Posterior vena cava (tissue), 2 donors: ENCODE measurements at regions of chr18 and their contacts with region 1.

Region 1: GRCh38 chr18:25853691-25854433 is 236.6 kb downstream of the SS18 start:
- DNase-seq: no peak

Region 2: DNA sequence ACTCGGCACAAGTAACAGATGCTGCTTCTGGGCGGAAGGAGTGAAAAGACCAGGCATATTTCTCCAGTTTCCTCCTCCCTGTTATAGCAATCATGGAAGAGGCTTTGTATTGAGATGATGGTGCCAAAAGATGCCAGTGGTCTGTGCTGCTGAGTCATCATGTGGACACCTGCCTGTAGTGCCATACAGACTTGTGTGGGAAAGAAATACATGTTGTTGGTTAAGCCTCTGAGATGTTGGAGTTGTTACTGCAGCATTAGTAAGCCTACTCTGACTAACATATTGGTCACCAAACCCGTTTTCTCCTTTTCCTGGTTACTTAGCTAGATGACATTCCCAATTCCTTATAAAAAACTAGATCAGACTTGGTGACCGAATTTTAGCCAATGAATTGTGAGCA is 858.8 kb before region 1 on chr18:
- intact Hi-C with region 1: loop called in 1 of 2 experiments (anchors 5 kb)
- DNase-seq: no peak

Region 3: GRCh38 chr18:25345081-25345866 is 508.6 kb before region 1 on chr18:
- intact Hi-C with region 1: no loop called
- DNase-seq: no peak